K562 (cell line): ENCODE measurements at regions of chrX and their contacts with region 1.

Region 1: GRCh38 chrX:109475174-109475891 is 6.6 kb downstream of the GUCY2F start:
- DNase-seq: peak; percentile 23 to 48 (median 28)
- ATAC-seq: peak; percentile 93
- H3K4me3 ChIP-seq: no peak overlapping the region
- H3K27ac ChIP-seq: no peak overlapping the region
- H3K4me1 ChIP-seq: no peaks in the 10 kb centered on the region; a peak in 2 of 5 replicates
- H3K27me3 ChIP-seq: peaks cover 0 to 5% of the 10 kb centered on the region in 2 experiments; a peak in 2 of 5 replicates
- CTCF ChIP-seq: peak; percentile 41 to 49 (median 46); a peak in 5 of 6 replicates
- EP300 ChIP-seq: no peak
- POLR2A ChIP-seq: no peak
- RAD21 ChIP-seq: 0 out of 4 replicates have a peak, but pooled peaks have one; percentile 24 to 25

Region 2: DNA sequence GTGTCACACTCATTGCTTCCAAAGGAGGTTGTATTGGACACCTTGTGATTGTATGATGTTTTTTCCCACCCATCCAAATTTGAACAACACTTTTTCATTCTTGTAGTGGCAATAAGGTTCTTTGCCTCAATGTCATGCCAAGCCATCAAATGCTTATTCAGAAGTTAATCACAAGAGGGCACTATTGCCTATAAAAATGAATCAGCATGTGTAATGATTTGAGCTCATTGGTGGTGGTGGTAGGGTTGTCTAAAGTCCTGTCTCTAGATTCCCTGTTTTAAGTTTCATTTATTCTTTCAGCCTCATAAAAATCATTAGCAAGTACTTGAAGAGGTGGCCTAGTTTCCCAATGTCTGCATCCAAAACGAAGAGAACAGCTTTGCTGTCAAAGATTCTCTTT is 776.0 kb before region 1 on chrX:
- CTCF ChIA-PET with region 1: no interaction called
- POLR2A ChIA-PET with region 1: no interaction called
- in situ Hi-C with region 1: no loop called
- intact Hi-C with region 1: loop called (anchors 5 kb)
- DNase-seq: peak in 3 of 4 experiments; percentile 5 to 8 (median 5)
- ATAC-seq: peak; percentile 51; the same call in 1 of the 3 replicates
- H3K4me3 ChIP-seq: no peak overlapping the region
- H3K27ac ChIP-seq: no peak overlapping the region
- H3K4me1 ChIP-seq: no peaks in the 10 kb centered on the region
- H3K27me3 ChIP-seq: no peaks in the 10 kb centered on the region
- CTCF ChIP-seq: peak; percentile 1 to 41 (median 22); a peak in 3 of 6 replicates
- EP300 ChIP-seq: no peak
- POLR2A ChIP-seq: no peak
- RAD21 ChIP-seq: peak; percentile 32 to 48; a peak in 3 of 4 replicates

Region 3: DNA sequence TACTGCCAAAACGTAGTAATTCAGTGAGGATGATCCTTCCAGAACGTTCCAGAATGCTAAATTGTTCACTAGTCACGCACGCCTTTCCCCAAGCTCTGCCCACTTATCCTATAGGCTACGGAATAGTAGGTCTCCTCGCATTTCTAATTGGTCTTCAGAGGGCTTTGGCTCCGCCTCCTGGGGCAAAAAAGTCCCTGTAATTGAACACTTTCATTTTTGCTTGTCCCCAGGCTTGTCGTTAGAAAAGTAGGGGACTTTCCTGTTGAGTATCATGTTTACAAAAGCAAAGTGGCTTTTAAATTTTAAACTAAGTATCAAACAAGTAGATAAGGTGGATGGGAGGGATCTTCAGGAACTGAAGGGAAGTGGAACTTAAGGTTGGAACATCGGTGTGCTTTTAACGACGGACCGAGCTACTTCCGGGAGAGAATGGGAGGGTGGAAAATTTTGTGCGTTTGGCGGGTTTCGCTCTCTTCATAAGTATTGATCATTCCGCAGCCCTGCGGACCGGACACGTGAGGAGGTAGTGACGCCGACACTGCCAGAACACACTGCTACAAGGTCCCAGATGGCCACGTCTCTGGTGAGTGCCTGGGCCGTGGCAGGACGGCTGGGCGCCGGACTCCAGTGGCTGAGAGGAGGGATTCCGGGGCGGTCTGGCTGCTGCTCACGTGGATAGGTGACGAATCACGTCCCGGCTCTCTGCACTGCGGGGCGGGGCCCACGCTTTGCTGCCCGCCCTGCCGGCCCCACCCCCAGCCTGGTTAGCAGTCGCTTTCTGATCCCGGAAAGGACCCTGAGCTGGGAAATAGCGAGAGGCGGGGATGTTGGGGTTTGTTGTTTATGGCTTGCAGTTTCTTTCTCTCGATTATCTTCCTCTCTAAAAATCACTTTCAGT is 61.4 kb after region 1 on chrX and contains the start of gene NXT2:
- CTCF ChIA-PET with region 1: no interaction called
- POLR2A ChIA-PET with region 1: no interaction called
- in situ Hi-C with region 1: no loop called
- intact Hi-C with region 1: no loop called
- DNase-seq: peak; percentile 91 to 94 (median 92)
- ATAC-seq: peak; percentile 100
- H3K4me3 ChIP-seq: peak within 1 kb of the TSS; percentile 78
- H3K27ac ChIP-seq: peak within 1 kb of the TSS; percentile 96
- H3K4me1 ChIP-seq: no peaks in the 10 kb centered on the region; a peak in 2 of 5 replicates
- H3K27me3 ChIP-seq: no peaks in the 10 kb centered on the region
- CTCF ChIP-seq: no peak
- EP300 ChIP-seq: no peak
- POLR2A ChIP-seq: peak; percentile 93
- RAD21 ChIP-seq: no peak
- polyA plus RNA-seq, gene NXT2: 26.5 to 29.6 TPM